ENCODE measurements at regions of chr11 and their contacts with region 1.

Region 1: DNA sequence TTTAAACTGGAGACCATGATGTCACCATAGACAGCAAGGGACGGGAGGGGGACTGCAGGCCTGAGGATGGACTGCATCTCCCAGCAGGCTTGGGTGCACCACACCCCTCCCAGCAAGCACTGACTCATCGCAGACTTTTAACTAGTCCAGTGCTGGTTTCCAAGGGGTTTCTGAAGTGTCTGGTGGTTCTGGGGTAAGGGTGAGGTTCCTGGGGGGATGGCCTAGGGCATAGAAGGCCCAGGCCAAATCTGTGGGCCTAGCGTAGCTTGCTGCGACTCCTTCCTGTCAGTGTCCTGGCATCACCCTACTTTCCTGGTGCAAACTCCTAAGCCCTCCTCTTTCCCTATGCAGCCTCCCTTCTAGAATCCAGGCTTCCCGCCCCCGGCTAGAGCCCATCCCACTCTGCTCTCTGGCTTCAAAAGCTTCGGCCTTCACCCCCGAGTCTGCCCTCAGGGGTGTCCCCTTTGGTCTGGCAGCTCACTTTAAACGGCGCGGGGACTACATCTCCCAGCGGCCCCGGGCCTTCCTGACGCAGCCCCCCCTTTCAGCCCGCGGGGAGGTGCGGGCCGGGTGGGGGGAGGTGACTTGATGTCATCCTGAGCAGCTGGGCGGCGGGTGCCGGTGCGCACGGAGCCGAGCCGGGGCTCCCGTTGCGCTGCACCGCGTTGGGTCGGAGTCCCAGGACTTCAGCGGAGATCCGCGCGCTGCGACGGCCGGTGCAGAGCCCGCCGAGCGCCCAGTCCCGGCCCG is at the start of gene PPP2R5B:
- DNase-seq: peak; percentile 91 to 99 (median 96)

Region 2: GRCh38 chr11:63906585-63906984 is 1017.7 kb before region 1 on chr11:
- intact Hi-C with region 1: no loop called
- DNase-seq: peak in 3 of 10 donors; percentile 21 to 87 (median 52)

Region 3: GRCh38 chr11:64878494-64879243 is 45.6 kb before region 1 on chr11 and contains the start of gene EHD1:
- intact Hi-C with region 1: loop called (anchors 1 kb)
- DNase-seq: peak; percentile 97 to 100 (median 99)

Region 4: DNA sequence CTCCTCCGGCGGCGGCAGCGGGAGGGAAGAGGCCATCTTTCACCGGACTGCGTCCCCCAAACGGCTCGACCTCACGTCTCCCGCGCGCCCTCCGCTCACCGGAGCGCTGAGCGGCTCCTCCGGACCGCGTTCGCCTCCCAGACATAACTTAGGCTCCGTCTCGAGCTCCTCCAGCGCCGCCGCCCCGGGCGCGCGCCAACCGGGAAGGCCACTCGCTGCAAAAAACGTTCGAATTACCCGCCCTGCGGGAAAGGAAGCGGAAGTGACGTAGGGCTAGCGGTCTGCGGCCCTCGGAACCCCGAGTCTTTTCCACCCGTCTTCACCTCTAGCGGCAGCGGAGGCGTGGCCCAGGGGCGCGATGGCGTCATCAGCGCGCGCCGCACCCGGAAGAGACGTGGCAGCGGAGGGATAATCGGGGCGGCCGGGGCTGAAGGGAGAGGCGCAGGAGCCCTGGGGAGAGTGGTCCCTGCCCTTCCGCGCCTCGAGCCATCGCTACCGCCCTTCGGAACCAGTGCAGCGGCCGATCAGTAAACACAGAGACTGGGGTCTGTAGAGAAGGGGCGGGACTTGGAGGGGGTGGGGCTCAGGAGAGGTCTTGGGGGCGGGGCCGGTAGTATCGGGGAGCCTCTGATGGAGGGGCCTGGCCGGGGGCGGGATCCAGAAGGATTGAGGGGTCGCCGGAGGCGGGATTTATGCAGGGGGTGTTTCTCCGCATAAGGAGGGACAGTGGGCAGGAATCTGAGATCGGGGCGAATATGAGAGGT is 159.7 kb after region 1 on chr11 and contains the starts of genes CDCA5 and ZFPL1:
- intact Hi-C with region 1: loop called (anchors 10 kb)
- DNase-seq: peak; percentile 95 to 100 (median 98)

Measured in posterior cingulate gyrus (tissue), 11 donors.